Panc1 (cell line): ENCODE measurements at regions of chr9 and their contacts with region 1.

Region 1: DNA sequence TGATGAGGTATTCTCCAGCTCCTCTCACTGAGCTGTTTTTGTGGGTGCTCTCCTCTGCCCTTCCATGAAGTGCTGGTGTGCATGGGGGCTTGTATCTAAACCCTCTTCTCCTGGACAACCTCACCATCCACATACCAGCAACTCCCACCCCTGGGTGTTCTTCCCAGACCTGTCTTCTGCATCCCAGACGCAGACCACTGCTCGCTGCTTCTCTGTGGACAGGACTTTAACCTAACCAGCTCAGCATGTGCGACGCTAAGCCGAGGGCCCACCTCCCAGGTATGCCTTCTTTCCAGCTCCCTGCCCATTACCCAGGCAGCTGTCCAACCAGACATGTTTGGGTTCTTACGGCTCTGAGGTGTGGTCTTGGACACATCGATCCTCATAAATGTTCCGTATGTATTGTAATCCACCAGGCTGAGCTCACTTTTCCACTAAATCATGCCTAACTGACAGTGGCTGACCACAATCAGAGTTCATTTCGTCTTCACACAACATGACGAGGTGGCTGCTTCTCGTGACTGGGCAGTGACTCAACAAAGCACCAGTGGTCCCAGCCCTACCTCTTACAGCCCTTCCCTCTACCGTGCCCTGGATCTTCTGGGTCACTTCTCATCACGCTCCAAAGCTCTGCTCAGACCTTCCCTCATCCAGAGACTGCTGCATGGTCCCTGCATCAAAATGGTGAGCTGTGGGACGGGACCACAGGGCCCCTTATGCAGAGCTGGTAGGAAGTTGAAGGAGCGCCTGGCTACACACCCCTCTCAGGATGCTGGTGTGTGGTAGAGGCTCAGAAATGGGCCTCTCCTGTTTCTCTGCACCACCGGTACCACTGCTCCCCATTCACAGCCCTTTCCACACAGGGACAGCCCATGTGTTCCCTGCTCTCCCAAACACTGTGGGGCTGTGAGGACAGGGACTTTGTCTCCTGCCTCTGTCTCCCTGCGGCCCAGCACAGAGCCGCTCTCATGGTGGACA is 9.6 kb upstream of the PTGES2 start:
- DNase-seq: no peak
- ATAC-seq: no peak
- H3K4me3 ChIP-seq: no peak overlapping the region
- H3K27ac ChIP-seq: no peak overlapping the region
- H3K4me1 ChIP-seq: no peaks in the 10 kb centered on the region
- H3K27me3 ChIP-seq: no peaks in the 10 kb centered on the region
- CTCF ChIP-seq: no peak

Region 2: GRCh38 chr9:128124873-128125569 is 12.1 kb before region 1 on chr9:
- CTCF ChIA-PET with region 1: no interaction called
- POLR2A ChIA-PET with region 1: interaction called, 16 read pairs
- in situ Hi-C with region 1: no loop called
- intact Hi-C with region 1: no loop called
- DNase-seq: no peak
- ATAC-seq: no peak
- H3K4me3 ChIP-seq: peak overlapping the region in 1 of 2 experiments; percentile 83; a peak in 1 of 4 replicates
- H3K27ac ChIP-seq: no peak overlapping the region
- H3K4me1 ChIP-seq: 0 out of 2 replicates have a peak, but pooled peaks cover 3% of the 10 kb centered on the region
- H3K27me3 ChIP-seq: no peaks in the 10 kb centered on the region
- CTCF ChIP-seq: peak; percentile 91

Region 3: DNA sequence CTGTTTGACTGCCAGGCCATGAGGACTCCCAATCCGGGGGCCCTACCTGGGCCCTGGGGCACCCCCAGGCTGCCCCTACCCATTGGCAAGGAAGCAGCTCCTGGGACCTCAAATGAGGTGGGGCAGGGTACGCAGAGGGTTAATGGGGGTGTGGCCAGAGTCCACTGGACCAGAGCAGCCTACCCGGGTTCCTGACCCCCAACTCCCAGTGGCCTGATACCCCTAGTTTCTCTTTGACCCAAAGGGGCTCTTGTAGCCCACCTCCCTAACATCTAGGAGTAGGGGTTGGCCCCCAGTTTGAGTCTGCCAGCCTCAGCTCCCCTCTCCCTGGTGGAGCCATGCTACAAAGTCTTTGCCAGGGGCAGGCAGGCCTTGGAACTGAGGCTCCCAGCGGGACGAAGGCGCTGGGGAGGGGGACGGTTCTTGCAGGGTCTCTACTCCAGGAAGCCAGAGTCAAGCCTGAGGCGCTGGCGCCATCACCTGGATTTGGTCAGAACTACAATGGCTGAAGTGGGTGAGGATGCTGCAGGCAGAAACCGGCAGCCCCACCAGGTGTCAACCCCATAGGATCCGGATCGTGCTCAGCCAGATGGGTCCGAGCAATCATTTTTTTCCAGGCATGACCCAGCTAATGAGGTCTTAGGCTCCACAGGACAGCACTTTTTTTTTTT is 275.1 kb after region 1 on chr9:
- CTCF ChIA-PET with region 1: no interaction called
- POLR2A ChIA-PET with region 1: no interaction called
- in situ Hi-C with region 1: no loop called
- intact Hi-C with region 1: no loop called
- DNase-seq: no peak
- ATAC-seq: peak; percentile 38; the same call in 1 of the 2 replicates
- H3K4me3 ChIP-seq: no peak overlapping the region
- H3K27ac ChIP-seq: no peak overlapping the region
- H3K4me1 ChIP-seq: peaks cover 4% of the 10 kb centered on the region; the same call in 1 of the 2 replicates
- H3K27me3 ChIP-seq: no peaks in the 10 kb centered on the region
- CTCF ChIP-seq: peak; percentile 80

Region 4: DNA sequence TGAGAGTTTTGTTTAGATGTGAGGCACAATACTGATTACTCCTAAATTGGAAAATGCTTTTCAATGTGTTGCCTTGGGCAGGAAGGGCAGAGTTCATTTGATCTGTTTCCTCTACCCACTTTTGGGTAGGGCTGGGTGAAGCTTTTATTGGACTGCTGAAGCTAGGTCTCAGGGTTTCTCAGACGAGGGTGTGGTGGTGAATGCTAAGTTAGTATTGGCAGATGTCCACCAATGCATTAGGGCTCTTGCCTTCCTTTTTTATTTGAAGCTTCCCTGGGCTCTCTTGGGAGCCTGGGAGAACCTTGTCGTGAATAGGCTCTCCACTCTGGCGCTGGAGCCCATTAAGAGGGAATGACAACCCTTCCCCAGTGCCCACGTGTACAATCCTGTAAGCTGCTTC is 438.4 kb after region 1 on chr9:
- CTCF ChIA-PET with region 1: no interaction called
- POLR2A ChIA-PET with region 1: no interaction called
- in situ Hi-C with region 1: no loop called
- intact Hi-C with region 1: no loop called
- DNase-seq: no peak
- ATAC-seq: no peak
- H3K4me3 ChIP-seq: no peak overlapping the region
- H3K27ac ChIP-seq: no peak overlapping the region
- H3K4me1 ChIP-seq: no peaks in the 10 kb centered on the region
- H3K27me3 ChIP-seq: no peaks in the 10 kb centered on the region
- CTCF ChIP-seq: no peak